ENCODE measurements at regions of chr3 and their contacts with region 1.

Region 1: GRCh38 chr3:151305101-151305750 is 11.4 kb downstream of the GPR87 start:
- DNase-seq: no peak
- H3K4me3 Mint-ChIP-seq: no peak overlapping the region
- H3K27ac Mint-ChIP-seq: peak overlapping the region; percentile 88
- H3K4me1 Mint-ChIP-seq: peaks cover 85% of the 10 kb centered on the region
- H3K27me3 Mint-ChIP-seq: no peaks in the 10 kb centered on the region

Region 2: GRCh38 chr3:150408221-150409102 is 896.8 kb before region 1 on chr3 and contains the start of gene TSC22D2:
- intact Hi-C with region 1: loop called (anchors 10 kb)
- DNase-seq: peak; percentile 92
- H3K4me3 Mint-ChIP-seq: peak within 1 kb of the TSS; percentile 93
- H3K27ac Mint-ChIP-seq: peak within 1 kb of the TSS; percentile 90
- H3K4me1 Mint-ChIP-seq: peaks cover 26% of the 10 kb centered on the region
- H3K27me3 Mint-ChIP-seq: peaks cover 7% of the 10 kb centered on the region
- total RNA-seq, gene TSC22D2: 20.3 and 21.3 TPM in 2 replicates

Region 3: DNA sequence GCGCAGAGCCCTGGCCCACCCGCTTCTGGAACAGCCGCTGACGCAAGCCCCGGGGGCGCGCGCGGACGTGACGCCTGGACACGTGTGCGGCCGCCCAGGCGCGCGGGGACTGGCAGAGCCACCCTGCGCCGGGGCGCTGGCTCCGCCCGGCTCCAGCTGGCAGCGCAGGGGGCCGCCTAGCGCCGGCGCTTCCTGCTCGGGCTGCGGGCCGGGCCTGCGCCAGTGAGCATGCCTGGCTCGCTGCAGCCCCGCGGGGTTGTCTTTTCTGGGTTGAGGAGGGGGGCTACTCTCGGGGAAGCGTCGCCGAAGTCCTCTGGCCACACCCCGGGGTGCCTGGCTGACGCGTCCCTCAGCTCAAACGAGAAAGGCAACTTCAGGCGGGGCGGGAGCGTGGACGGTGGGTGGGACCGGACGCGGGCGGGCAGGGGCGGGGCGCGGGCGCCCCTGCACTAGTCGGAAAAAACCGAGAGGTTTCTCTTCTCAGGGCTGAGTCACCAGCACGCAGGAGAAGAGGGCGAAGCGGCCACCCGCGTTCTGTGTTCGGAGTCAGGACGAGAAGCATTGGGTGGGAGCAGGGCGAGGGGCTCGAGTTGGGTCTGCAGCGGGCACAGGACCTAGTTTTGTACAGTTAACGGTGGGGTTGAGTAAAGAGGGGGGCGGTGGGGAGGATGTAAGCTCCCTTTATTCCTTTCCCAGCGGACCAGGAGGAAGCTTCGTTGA is 541.9 kb before region 1 on chr3 and contains the start of gene SIAH2:
- intact Hi-C with region 1: loop called (anchors 5 kb)
- DNase-seq: peak; percentile 91
- H3K4me3 Mint-ChIP-seq: peak within 1 kb of the TSS; percentile 100
- H3K27ac Mint-ChIP-seq: peak within 1 kb of the TSS; percentile 100
- H3K4me1 Mint-ChIP-seq: peaks cover 50% of the 10 kb centered on the region
- H3K27me3 Mint-ChIP-seq: no peaks in the 10 kb centered on the region
- total RNA-seq, gene SIAH2: 108 and 116 TPM in 2 replicates

Region 4: DNA sequence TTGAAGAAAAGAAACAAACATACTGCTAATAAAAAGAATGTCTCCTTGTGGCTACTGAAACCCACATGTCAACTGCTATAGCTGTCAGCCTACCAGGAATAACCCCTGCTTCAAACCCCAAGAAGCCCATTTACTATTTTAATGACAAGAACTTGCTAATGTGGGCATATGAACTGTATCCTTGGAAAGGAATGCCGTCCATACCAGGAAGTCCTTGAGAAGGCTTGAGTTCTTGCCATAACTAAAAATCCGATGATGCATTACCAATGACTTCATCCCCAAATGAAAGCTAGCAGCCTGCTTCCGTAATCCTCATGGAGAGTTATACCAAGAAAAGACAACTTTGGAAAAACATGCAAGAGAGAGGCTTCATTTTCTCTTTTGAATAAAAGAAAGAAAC is 434.8 kb before region 1 on chr3:
- intact Hi-C with region 1: no loop called
- DNase-seq: no peak
- H3K4me3 Mint-ChIP-seq: no peak overlapping the region
- H3K27ac Mint-ChIP-seq: no peak overlapping the region
- H3K4me1 Mint-ChIP-seq: peaks cover 11% of the 10 kb centered on the region
- H3K27me3 Mint-ChIP-seq: peaks cover 3% of the 10 kb centered on the region

Region 5: DNA sequence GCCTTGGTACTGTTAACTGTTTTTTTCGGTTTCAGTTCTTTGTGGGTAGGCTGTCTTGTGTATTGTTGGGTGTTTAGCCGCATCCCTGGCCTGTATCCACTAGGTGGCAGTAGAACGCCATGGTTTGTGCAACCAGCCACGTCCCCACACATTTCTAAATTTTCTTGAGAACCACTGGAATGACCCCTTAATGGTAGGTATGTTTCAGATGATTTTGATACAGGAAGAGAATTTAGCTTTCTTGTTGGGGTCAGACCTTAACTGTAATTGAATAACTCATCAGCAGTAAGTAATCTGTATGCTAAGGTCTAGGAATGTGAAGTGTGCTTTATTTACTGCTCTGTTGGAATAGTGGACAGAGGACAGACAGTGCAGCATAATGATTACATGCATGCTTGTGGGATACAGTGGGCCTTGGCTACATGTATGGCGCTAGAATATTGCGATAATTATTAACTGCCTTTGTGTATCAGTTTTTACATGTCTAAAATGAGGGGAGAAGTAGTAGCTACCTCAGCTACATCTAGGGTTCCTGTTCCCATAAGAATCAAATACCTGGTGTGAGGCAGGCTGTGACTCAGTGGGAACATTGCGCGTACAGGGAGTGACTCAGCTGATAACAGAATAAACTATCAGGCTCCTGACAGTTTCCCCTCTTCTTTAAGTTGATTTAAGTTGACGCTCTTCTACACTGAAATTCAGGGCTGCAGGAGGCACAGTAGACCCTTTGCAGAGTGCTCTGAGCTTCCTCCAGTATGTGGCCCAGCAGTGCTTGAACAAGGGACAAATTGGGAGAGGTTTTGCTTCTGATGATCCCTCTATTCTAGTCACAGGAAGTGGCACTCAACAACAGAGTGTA is 77.2 kb before region 1 on chr3:
- intact Hi-C with region 1: loop called (anchors 1 kb)
- DNase-seq: peak; percentile 71
- H3K4me3 Mint-ChIP-seq: no peak overlapping the region
- H3K27ac Mint-ChIP-seq: peak overlapping the region; percentile 83
- H3K4me1 Mint-ChIP-seq: peaks cover 59% of the 10 kb centered on the region
- H3K27me3 Mint-ChIP-seq: no peaks in the 10 kb centered on the region

Region 6: GRCh38 chr3:151316267-151316991 is 11.2 kb after region 1 on chr3 and contains the start of gene GPR87:
- intact Hi-C with region 1: loop called (anchors 1 kb)
- DNase-seq: no peak
- H3K4me3 Mint-ChIP-seq: peak within 1 kb of the TSS; percentile 55
- H3K27ac Mint-ChIP-seq: peak within 1 kb of the TSS; percentile 80
- H3K4me1 Mint-ChIP-seq: peaks cover 51% of the 10 kb centered on the region
- H3K27me3 Mint-ChIP-seq: no peaks in the 10 kb centered on the region
- total RNA-seq, gene GPR87: 1.1 and 1.2 TPM in 2 replicates

Region 7: GRCh38 chr3:151412989-151413388 is 107.8 kb after region 1 on chr3:
- intact Hi-C with region 1: no loop called
- DNase-seq: no peak
- H3K4me3 Mint-ChIP-seq: no peak overlapping the region
- H3K27ac Mint-ChIP-seq: no peak overlapping the region
- H3K4me1 Mint-ChIP-seq: no peaks in the 10 kb centered on the region
- H3K27me3 Mint-ChIP-seq: no peaks in the 10 kb centered on the region

Region 8: GRCh38 chr3:151896241-151897012 is 591.2 kb after region 1 on chr3:
- intact Hi-C with region 1: loop called (anchors 5 kb)
- DNase-seq: no peak
- H3K4me3 Mint-ChIP-seq: no peak overlapping the region
- H3K27ac Mint-ChIP-seq: no peak overlapping the region
- H3K4me1 Mint-ChIP-seq: peaks cover 35% of the 10 kb centered on the region
- H3K27me3 Mint-ChIP-seq: peaks cover 4% of the 10 kb centered on the region

Region 9: DNA sequence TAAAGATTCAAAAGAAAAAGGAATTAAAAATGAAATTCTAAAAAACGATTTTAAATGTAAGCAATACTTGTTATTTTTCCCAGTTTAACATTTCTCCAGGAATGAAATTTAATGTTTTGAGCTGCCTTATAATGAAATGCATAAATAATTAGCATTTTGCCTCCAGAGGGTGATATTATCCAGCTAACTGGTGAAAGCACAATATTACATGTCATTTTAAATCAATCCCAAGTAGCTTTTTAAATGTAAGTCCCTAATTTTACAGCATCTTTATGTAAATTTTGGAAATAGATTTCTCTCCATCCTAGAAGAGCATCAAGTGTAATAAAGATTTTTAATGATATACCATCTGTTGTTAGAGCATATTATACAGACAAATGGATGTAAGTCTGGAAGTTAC is 1390.6 kb after region 1 on chr3:
- intact Hi-C with region 1: loop called (anchors 10 kb)
- DNase-seq: no peak
- H3K4me3 Mint-ChIP-seq: no peak overlapping the region
- H3K27ac Mint-ChIP-seq: no peak overlapping the region
- H3K4me1 Mint-ChIP-seq: peaks cover 27% of the 10 kb centered on the region
- H3K27me3 Mint-ChIP-seq: peaks cover 3% of the 10 kb centered on the region

Measured in activated T-helper 2 cell treated with anti-CD3 and anti-CD28 coated beads, Interferon-gamma antibody, Interleukin-2, Interleukin-4, amounts not matched to agents 10 μg/mL and 5 μg/mL and 100 μg/mL, durations not matched to agents 14 hours and 24 hours and 36 hours (primary cell).